ENCODE measurements at regions of chr16 and their contacts with region 1.

Region 1: GRCh38 chr16:2867987-2868789 is 10.2 kb upstream of the PRSS22 start:
- DNase-seq: peak; percentile 83 to 99
- H3K4me3 ChIP-seq: peak overlapping the region; percentile 29 to 61 (median 57)
- H3K27ac ChIP-seq: peak overlapping the region; percentile 58; the same call in 1 of the 2 replicates
- H3K4me1 ChIP-seq: no peaks in the 10 kb centered on the region
- H3K27me3 ChIP-seq: peaks cover 7 to 40% (median 32%) of the 10 kb centered on the region in 4 experiments
- CTCF ChIP-seq: peak; percentile 89 to 98 (median 94)
- EP300 ChIP-seq: no peak
- POLR2A ChIP-seq: peak in 1 of 2 experiments; percentile 83; a peak in 2 of 3 replicates
- RAD21 ChIP-seq: peak; percentile 91 to 94

Region 2: GRCh38 chr16:2799866-2800239 is 68.3 kb before region 1 on chr16:
- CTCF ChIA-PET with region 1: interaction called, 10 read pairs
- POLR2A ChIA-PET with region 1: no interaction called
- DNase-seq: no peak
- H3K4me3 ChIP-seq: no peak overlapping the region
- H3K27ac ChIP-seq: no peak overlapping the region
- H3K4me1 ChIP-seq: no peaks in the 10 kb centered on the region
- H3K27me3 ChIP-seq: no peaks in the 10 kb centered on the region
- CTCF ChIP-seq: no peak
- EP300 ChIP-seq: no peak
- POLR2A ChIP-seq: no peak
- RAD21 ChIP-seq: no peak

Region 3: DNA sequence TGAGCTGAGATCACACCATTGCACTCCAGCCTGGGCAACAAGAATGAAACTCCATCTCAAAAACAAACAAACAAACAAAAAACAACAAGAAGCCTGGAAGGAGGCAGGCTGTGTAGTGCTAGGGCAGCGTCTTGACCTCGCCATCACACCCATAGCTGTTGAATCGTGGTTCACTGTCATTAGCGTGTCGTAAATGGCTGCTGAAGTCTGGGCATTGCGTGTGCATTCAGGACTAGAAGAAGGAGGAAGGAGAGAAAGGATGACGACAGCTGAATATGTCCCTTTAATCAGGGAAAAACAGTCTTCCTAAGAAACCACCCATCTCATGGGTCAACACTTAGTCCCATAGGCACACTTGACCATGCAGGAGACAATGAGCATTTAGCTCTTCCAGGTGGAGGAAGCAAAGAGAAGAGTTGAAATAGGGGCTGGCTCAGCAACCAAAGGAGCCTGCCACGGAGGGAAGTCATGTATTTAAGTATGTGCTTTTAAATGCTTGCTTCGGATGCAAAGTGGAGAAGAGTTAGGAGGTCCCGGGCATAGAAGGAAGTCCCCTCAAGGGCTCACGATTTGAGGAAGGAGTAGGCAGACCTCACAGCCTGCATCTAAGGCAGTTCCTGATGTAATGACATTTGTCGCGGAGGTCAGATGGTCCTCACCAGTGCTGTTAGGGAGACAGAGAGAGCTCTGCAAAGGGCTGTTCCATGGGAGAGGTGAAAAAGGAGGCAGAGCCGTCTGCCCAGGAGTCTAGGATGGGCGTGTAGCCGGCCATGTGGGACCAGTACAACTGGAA is 19.1 kb before region 1 on chr16:
- CTCF ChIA-PET with region 1: interaction called, 49 read pairs
- POLR2A ChIA-PET with region 1: interaction called, 3 read pairs
- DNase-seq: no peak
- H3K4me3 ChIP-seq: no peak overlapping the region
- H3K27ac ChIP-seq: no peak overlapping the region
- H3K4me1 ChIP-seq: no peaks in the 10 kb centered on the region
- H3K27me3 ChIP-seq: peaks cover 0 to 13% (median 2%) of the 10 kb centered on the region in 4 experiments; a peak in 3 of 7 replicates
- CTCF ChIP-seq: no peak
- EP300 ChIP-seq: no peak
- POLR2A ChIP-seq: no peak
- RAD21 ChIP-seq: no peak

Region 4: GRCh38 chr16:2977406-2977805 is 109.2 kb after region 1 on chr16:
- CTCF ChIA-PET with region 1: no interaction called
- POLR2A ChIA-PET with region 1: no interaction called
- DNase-seq: no peak
- H3K4me3 ChIP-seq: no peak overlapping the region
- H3K27ac ChIP-seq: no peak overlapping the region
- H3K4me1 ChIP-seq: peaks cover 0 to 17% (median 13%) of the 10 kb centered on the region in 4 experiments; a peak in 6 of 7 replicates
- H3K27me3 ChIP-seq: no peaks in the 10 kb centered on the region
- CTCF ChIP-seq: no peak
- EP300 ChIP-seq: no peak
- POLR2A ChIP-seq: no peak
- RAD21 ChIP-seq: no peak